Pancreas (tissue), 10 donors: ENCODE measurements at regions of chr11 and their contacts with region 1.

Region 1: DNA sequence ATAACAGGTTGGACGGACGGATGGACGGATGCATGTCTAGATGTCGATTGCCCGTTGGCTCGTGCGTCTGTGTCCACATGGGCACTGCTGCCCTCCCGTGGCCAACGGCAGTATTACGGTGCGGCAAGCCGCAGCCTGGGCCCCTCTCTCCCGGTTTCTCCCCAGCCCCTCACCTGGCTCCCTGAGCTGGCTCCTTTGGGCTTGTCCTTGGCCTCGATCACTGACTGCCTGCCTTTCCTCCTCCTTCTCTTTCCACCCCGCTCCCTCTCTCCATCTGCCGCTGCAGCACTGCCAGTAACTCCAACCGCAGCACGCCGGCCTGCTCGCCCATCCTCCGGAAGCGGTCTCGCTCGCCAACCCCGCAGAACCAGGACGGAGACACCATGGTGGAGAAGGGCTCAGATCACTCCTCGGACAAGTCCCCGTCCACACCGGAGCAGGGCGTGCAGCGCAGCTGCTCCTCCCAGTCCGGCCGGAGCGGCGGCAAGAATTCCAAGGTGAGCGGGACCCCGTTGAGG is 77.3 kb downstream of the SCN3B start:
- DNase-seq: peak; percentile 27 to 93 (median 73)
- ATAC-seq: peak; percentile 57 to 79 (median 75)
- H3K4me3 ChIP-seq: no peak overlapping the region
- H3K27ac ChIP-seq: no peak overlapping the region
- H3K4me1 ChIP-seq: peaks cover 0 to 3% (median 0%) of the 10 kb centered on the region in 3 donors
- H3K27me3 ChIP-seq: peaks cover 0 to 5% (median 2%) of the 10 kb centered on the region in 4 donors
- CTCF ChIP-seq: peak; percentile 81 to 92 (median 88)

Region 2: GRCh38 chr11:123511037-123511870 is 65.9 kb before region 1 on chr11:
- intact Hi-C with region 1: loop called in 2 of 3 experiments (anchors 5 kb)
- DNase-seq: peak; percentile 57 to 85 (median 78)
- ATAC-seq: peak; percentile 87 to 99 (median 97)
- H3K4me3 ChIP-seq: no peak overlapping the region
- H3K27ac ChIP-seq: no peak overlapping the region
- H3K4me1 ChIP-seq: no peaks in the 10 kb centered on the region
- H3K27me3 ChIP-seq: no peaks in the 10 kb centered on the region
- CTCF ChIP-seq: peak; percentile 72 to 89 (median 86)

Region 3: GRCh38 chr11:123707606-123708205 is 130.6 kb after region 1 on chr11:
- intact Hi-C with region 1: loop called in 1 of 3 experiments (anchors 5 kb)
- DNase-seq: peak in 3 of 6 donors; percentile 28 to 56 (median 35)
- ATAC-seq: peak; percentile 60 to 84 (median 80)
- H3K4me3 ChIP-seq: no peak overlapping the region
- H3K27ac ChIP-seq: no peak overlapping the region
- H3K4me1 ChIP-seq: no peaks in the 10 kb centered on the region
- H3K27me3 ChIP-seq: no peaks in the 10 kb centered on the region
- CTCF ChIP-seq: peak; percentile 17 to 55 (median 36)